Endothelial cell of umbilical vein (primary cell): ENCODE measurements at regions of chr6 and their contacts with region 1.

Region 1: GRCh38 chr6:159693128-159693893 is at the start of gene SOD2:
- DNase-seq: peak; percentile 84
- H3K4me3 ChIP-seq: peak within 1 kb of the TSS; percentile 76 to 78 (median 77)
- H3K27ac ChIP-seq: peak within 1 kb of the TSS; percentile 86
- H3K4me1 ChIP-seq: peaks cover 27% of the 10 kb centered on the region
- H3K27me3 ChIP-seq: no peaks in the 10 kb centered on the region
- CTCF ChIP-seq: no peak
- POLR2A ChIP-seq: peak; percentile 84
- total RNA-seq, gene SOD2: 58.9 and 62.7 TPM in 2 replicates

Region 2: DNA sequence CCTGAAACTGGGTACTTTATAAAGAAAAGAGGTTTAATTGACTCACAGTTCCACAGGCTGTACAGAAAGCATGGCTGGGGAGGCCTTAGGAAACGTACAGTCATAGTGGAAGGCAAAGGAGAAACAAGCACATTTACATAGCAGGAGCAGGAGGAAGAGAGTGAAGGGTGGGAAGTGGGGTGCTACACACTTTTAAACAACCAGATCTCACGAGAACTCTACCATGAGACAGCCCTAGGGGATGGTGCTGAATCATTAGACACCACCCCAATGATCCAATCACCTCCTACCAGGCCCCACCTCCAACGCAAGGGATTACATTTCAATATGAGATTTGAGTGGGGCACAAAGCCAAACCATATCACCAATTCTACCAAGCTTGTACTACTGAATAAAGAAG is 531.5 kb before region 1 on chr6:
- CTCF ChIA-PET with region 1: no interaction called
- POLR2A ChIA-PET with region 1: no interaction called
- dilution Hi-C with region 1: no loop called
- intact Hi-C with region 1: no loop called
- DNase-seq: no peak
- H3K4me3 ChIP-seq: no peak overlapping the region
- H3K27ac ChIP-seq: no peak overlapping the region
- H3K4me1 ChIP-seq: no peaks in the 10 kb centered on the region
- H3K27me3 ChIP-seq: peaks cover 7 to 14% of the 10 kb centered on the region in 2 experiments
- CTCF ChIP-seq: no peak
- POLR2A ChIP-seq: no peak

Region 3: DNA sequence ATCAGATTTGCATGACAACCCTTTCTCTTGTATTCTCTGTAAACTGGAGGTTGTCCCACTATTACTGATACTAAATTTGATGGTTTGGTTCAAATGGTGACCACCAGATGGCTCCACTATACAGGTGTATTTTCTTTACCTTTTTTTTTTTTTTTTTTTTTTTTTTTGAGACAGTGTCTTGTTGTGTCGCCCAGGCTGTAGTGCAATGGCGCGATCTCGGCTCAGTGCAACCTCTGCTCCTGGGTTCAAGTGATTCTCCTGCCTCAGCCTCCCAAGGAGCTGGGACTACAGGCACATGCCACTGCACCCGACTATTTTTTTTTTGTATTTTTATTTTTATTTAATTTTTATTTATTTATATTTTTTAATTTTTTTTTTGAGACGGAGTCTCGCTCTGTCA is 27.4 kb after region 1 on chr6:
- CTCF ChIA-PET with region 1: interaction called, 13 read pairs
- POLR2A ChIA-PET with region 1: no interaction called
- dilution Hi-C with region 1: no loop called
- intact Hi-C with region 1: no loop called
- DNase-seq: peak; percentile 39
- H3K4me3 ChIP-seq: no peak overlapping the region
- H3K27ac ChIP-seq: no peak overlapping the region
- H3K4me1 ChIP-seq: peaks cover under 1% of the 10 kb centered on the region
- H3K27me3 ChIP-seq: no peaks in the 10 kb centered on the region
- CTCF ChIP-seq: peak; percentile 17 to 19
- POLR2A ChIP-seq: no peak

Region 4: GRCh38 chr6:159761873-159762680 is 68.8 kb after region 1 on chr6 and contains the start of gene ACAT2:
- CTCF ChIA-PET with region 1: interaction called, 5 read pairs
- POLR2A ChIA-PET with region 1: interaction called, 4 read pairs
- dilution Hi-C with region 1: no loop called
- intact Hi-C with region 1: loop called (anchors 1 kb)
- DNase-seq: peak; percentile 94
- H3K4me3 ChIP-seq: peak within 1 kb of the TSS; percentile 73 to 97 (median 92)
- H3K27ac ChIP-seq: peak within 1 kb of the TSS; percentile 85
- H3K4me1 ChIP-seq: peaks cover 20% of the 10 kb centered on the region
- H3K27me3 ChIP-seq: no peaks in the 10 kb centered on the region
- CTCF ChIP-seq: no peak
- POLR2A ChIP-seq: peak; percentile 72
- total RNA-seq, gene ACAT2: 114 and 131 TPM in 2 replicates

Region 5: DNA sequence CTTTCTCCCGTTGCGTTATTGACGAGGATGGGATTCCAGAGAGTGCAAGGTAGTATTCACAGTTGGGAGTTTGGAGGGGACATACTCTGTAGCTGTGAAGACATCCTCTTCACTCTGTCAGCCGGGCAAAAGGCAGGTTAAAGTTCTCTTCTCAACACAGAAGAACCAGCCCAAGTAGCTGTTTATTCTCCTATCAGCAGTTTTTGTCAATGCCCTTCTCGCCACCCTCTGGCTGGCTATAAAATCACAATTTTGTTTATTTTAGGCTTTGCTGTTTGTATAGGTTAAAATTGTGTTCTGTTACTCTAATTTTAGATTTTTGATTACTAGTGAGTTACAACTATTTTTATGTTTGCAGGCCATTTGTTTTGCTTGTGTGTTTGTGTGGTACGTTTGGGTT is 159.6 kb after region 1 on chr6:
- CTCF ChIA-PET with region 1: interaction called, 15 read pairs
- POLR2A ChIA-PET with region 1: no interaction called
- dilution Hi-C with region 1: no loop called
- intact Hi-C with region 1: loop called (anchors 2 kb)
- DNase-seq: no peak
- H3K4me3 ChIP-seq: no peak overlapping the region
- H3K27ac ChIP-seq: no peak overlapping the region
- H3K4me1 ChIP-seq: no peaks in the 10 kb centered on the region
- H3K27me3 ChIP-seq: no peaks in the 10 kb centered on the region
- CTCF ChIP-seq: no peak
- POLR2A ChIP-seq: no peak

Region 6: GRCh38 chr6:160102956-160103824 is 409.9 kb after region 1 on chr6:
- CTCF ChIA-PET with region 1: no interaction called
- POLR2A ChIA-PET with region 1: no interaction called
- dilution Hi-C with region 1: no loop called
- intact Hi-C with region 1: loop called (anchors 1 kb)
- DNase-seq: peak; percentile 40
- H3K4me3 ChIP-seq: no peak overlapping the region
- H3K27ac ChIP-seq: no peak overlapping the region
- H3K4me1 ChIP-seq: no peaks in the 10 kb centered on the region
- H3K27me3 ChIP-seq: no peaks in the 10 kb centered on the region
- CTCF ChIP-seq: peak; percentile 41 to 59
- POLR2A ChIP-seq: no peak

Region 7: GRCh38 chr6:160534050-160534696 is 840.9 kb after region 1 on chr6:
- CTCF ChIA-PET with region 1: no interaction called
- POLR2A ChIA-PET with region 1: no interaction called
- dilution Hi-C with region 1: no loop called
- intact Hi-C with region 1: loop called (anchors 10 kb)
- DNase-seq: peak; percentile 47
- H3K4me3 ChIP-seq: no peak overlapping the region
- H3K27ac ChIP-seq: no peak overlapping the region
- H3K4me1 ChIP-seq: no peaks in the 10 kb centered on the region
- H3K27me3 ChIP-seq: no peaks in the 10 kb centered on the region
- CTCF ChIP-seq: peak; percentile 71 to 79
- POLR2A ChIP-seq: no peak